Ovary (tissue), 10 donors: ENCODE measurements at regions of chr7 and their contacts with region 1.

Region 1: DNA sequence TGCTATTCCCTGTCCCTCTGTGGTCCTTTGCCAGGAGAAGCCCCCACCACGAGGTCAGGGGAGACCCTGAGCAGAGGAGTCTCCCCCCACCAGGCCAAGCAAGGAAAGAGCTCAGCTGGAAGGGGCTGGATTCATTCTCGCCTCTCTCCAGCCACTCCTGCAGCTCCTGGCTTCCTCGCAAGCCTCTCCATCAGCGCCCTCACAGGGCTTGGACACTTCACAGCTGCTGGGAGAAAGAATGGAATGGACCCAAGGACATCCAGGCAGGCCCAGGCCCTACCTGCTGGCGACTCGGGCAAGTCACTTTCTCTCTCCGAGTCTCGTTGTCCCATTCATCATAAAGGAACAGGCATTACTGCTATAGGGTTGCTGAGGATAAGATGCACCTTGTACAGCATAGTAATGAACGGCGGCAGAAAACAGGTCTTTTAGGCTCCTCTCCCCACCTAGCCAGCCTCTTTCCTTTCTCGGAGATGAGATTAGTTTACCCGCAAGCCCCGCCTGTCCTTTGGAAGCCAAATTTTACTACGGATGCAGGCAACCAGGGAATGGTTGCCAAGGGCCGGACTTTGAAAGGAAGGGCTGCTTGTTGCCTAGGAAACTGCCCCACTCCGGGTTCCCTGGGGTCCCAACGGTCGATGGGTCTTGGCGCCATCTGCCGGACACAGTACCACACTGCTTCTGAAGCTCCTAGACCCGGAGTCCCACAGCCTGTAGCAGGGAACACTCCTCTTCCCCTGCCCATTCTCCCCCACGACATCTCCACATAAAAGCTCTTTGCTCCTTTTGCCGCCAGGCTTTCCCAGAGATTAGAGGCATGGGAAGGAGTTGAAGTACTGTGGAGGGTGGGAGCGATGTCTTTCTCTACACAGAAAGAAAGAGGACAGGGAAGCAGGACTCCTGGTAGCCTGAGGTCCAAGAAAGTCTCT is 22.3 kb downstream of the IMPDH1 start:
- DNase-seq: peak; percentile 78 to 92 (median 86)
- H3K4me3 ChIP-seq: no peak overlapping the region
- H3K27ac ChIP-seq: no peak overlapping the region
- H3K4me1 ChIP-seq: no peaks in the 10 kb centered on the region
- H3K27me3 ChIP-seq: no peaks in the 10 kb centered on the region
- CTCF ChIP-seq: peak; percentile 69 to 81 (median 70)
- EP300 ChIP-seq: no peak
- POLR2A ChIP-seq: no peak

Region 2: GRCh38 chr7:128347647-128348097 is 39.8 kb before region 1 on chr7:
- intact Hi-C with region 1: loop called in 2 of 4 experiments (anchors 5 kb)
- DNase-seq: peak in 3 of 5 donors; percentile 43 to 62 (median 44)
- H3K4me3 ChIP-seq: no peak overlapping the region
- H3K27ac ChIP-seq: no peak overlapping the region
- H3K4me1 ChIP-seq: peaks cover 4% of the 10 kb centered on the region
- H3K27me3 ChIP-seq: no peaks in the 10 kb centered on the region
- CTCF ChIP-seq: peak in 1 of 3 donors; percentile 10
- EP300 ChIP-seq: no peak
- POLR2A ChIP-seq: no peak

Region 3: DNA sequence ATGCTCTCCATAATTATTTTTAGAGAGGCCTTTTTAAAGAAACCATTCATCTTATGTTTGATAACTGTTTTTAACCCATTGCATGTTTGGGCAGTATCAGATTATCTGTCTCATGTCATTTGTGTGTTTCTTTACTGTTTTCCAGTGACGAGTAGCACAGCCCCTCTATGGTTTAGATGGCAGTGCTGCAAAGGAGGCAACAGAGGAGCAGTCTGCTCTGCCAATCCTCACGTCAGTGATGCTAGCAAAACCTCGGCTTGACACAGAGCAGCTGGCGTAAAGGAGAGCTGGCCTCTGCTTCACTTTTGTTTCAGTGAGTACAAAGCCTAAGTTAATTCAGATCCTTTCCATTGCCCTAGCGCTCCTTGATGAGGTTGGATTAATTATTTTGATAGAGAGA is 204.2 kb after region 1 on chr7:
- intact Hi-C with region 1: no loop called
- DNase-seq: no peak
- H3K4me3 ChIP-seq: no peak overlapping the region
- H3K27ac ChIP-seq: no peak overlapping the region
- H3K4me1 ChIP-seq: no peaks in the 10 kb centered on the region
- H3K27me3 ChIP-seq: no peaks in the 10 kb centered on the region
- CTCF ChIP-seq: no peak
- EP300 ChIP-seq: no peak
- POLR2A ChIP-seq: no peak

Region 4: GRCh38 chr7:128849804-128850490 is 462.5 kb after region 1 on chr7:
- intact Hi-C with region 1: no loop called
- DNase-seq: no peak
- H3K4me3 ChIP-seq: no peak overlapping the region
- H3K27ac ChIP-seq: no peak overlapping the region
- H3K4me1 ChIP-seq: no peaks in the 10 kb centered on the region
- H3K27me3 ChIP-seq: no peaks in the 10 kb centered on the region
- CTCF ChIP-seq: no peak
- EP300 ChIP-seq: no peak
- POLR2A ChIP-seq: no peak